ENCODE measurements at regions of chr9 and their contacts with region 1.

Region 1: GRCh38 chr9:83649080-83649479 is 26.1 kb downstream of the IDNK start:
- DNase-seq: peak; percentile 70
- CTCF ChIP-seq: peak; percentile 82

Region 2: GRCh38 chr9:83622939-83623678 is 26.0 kb before region 1 on chr9 and contains the start of gene IDNK:
- CTCF ChIA-PET with region 1: interaction called, 34 read pairs
- POLR2A ChIA-PET with region 1: no interaction called
- DNase-seq: peak; percentile 82
- CTCF ChIP-seq: no peak

Region 3: DNA sequence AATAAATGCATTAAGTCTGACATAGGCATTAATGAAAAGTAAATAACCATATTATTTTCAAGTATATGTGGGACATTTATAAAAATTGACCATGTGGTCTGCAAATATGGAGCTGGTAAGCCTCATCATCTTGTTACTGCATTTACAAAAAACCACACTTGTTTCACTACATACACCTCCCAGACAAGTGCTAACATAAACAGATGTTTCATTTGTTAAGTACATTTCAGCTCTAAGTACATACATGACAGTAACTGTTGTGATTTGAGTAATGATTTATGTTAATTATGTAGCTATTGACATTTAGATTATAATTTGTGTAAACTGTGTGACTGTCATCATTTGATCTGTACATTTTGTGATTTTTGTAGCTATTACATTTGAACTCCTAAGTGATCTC is 12.3 kb before region 1 on chr9:
- CTCF ChIA-PET with region 1: interaction called, 58 read pairs
- POLR2A ChIA-PET with region 1: no interaction called
- DNase-seq: no peak
- CTCF ChIP-seq: no peak

Region 4: DNA sequence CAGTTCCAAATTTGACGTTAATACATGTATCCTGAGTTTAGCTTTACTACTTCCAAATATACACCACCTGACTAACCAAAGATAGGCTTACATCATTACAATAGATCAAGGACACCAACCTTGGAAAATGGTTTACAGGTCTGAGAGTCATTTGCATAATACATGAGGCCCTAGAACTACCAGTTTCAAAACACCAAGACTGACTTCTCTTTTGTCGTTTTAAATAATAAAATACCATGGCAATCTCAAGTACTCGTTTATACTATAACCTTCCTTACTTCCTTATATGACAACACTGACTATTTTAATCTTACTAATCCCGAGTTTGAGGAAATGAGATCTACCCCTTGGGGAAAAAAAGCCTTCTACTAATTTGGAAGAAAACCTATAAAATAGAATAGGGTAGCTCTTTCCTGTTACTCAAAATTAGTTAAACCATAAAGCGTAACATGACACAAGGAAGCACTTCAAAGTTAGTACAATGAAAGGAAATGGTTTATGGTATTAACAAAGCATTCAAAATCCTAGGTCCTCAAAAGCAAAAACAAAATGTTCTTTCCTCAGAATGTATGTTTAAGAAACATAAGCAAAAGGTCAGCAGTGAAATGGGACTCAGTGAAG is 16.6 kb after region 1 on chr9:
- CTCF ChIA-PET with region 1: interaction called, 13 read pairs
- POLR2A ChIA-PET with region 1: no interaction called
- DNase-seq: peak; percentile 22
- CTCF ChIP-seq: no peak

Region 5: DNA sequence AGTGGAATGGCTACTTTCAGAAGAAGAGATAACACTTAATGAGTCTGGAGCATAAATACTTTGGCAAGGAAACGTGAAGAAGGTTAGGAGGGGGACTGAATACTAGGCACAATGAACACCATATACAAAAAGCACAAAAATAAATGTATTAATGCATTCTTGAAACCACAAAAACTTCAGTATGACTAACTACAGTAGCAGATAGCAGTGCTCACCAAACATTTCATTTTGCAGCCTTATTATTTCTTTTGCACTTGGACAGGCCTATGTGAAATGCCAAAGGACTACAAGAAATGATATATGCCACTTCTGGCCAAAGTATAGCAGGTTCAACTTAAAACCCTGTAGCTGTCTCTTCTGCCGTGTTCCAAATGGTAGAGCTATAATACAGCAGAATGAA is 32.4 kb after region 1 on chr9:
- CTCF ChIA-PET with region 1: interaction called, 15 read pairs
- POLR2A ChIA-PET with region 1: no interaction called
- DNase-seq: no peak
- CTCF ChIP-seq: no peak

Region 6: DNA sequence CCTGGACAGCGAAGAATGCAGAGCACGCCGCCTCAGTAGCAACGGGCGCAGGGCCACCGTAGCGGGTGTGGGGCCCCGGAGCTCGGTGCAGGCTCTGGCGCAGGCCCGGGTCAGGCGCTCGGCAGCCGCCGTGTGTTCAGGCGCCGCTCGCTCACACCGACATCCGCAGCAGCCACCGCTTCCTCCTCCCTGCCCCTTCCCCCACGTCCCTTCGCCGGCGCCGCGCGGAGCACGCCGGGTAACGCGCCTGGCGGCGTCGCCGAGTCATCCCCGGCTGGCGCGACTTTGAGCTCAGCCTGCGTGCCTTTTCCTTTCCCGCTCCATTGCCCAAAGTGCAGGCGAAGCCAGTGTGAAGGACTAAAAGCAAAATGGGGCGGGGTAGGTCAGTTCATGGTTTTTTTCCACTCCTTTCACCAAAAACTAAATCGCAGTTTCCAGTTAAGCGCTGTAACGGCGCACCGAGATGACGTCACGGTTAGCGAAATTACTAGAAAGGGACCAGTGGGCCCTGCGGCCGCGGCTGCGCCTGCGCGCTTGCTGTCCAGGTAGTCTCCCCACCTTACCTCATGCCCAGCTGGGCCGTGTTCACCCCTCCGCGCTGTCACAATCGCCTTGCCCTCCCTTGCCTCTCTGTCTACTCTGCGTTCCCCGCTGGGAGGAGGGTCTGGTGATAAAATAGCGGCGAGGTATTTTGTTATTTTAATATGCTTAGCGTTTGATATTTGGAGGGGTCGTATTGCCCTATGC is 58.9 kb after region 1 on chr9 and contains the start of gene UBQLN1:
- CTCF ChIA-PET with region 1: interaction called, 11 read pairs
- POLR2A ChIA-PET with region 1: interaction called, 3 read pairs
- DNase-seq: peak; percentile 97
- CTCF ChIP-seq: no peak

Measured in GM10248 (cell line).